Endothelial cell of umbilical vein (primary cell): ENCODE measurements at regions of chr3 and their contacts with region 1.

Region 1: GRCh38 chr3:148955544-148956346 is 35.6 kb upstream of the GYG1 start:
- DNase-seq: peak; percentile 87
- H3K4me3 ChIP-seq: no peak overlapping the region
- H3K27ac ChIP-seq: no peak overlapping the region
- H3K4me1 ChIP-seq: peaks cover 4% of the 10 kb centered on the region
- H3K27me3 ChIP-seq: no peaks in the 10 kb centered on the region
- CTCF ChIP-seq: peak; percentile 41 to 64
- POLR2A ChIP-seq: no peak

Region 2: GRCh38 chr3:148379763-148380382 is 575.9 kb before region 1 on chr3:
- CTCF ChIA-PET with region 1: no interaction called
- POLR2A ChIA-PET with region 1: no interaction called
- dilution Hi-C with region 1: no loop called
- intact Hi-C with region 1: no loop called
- DNase-seq: peak; percentile 58
- H3K4me3 ChIP-seq: no peak overlapping the region
- H3K27ac ChIP-seq: no peak overlapping the region
- H3K4me1 ChIP-seq: no peaks in the 10 kb centered on the region
- H3K27me3 ChIP-seq: no peaks in the 10 kb centered on the region
- CTCF ChIP-seq: peak; percentile 26 to 34
- POLR2A ChIP-seq: no peak

Region 3: GRCh38 chr3:148757238-148758215 is 198.2 kb before region 1 on chr3:
- CTCF ChIA-PET with region 1: no interaction called
- POLR2A ChIA-PET with region 1: no interaction called
- dilution Hi-C with region 1: no loop called
- intact Hi-C with region 1: no loop called
- DNase-seq: no peak
- H3K4me3 ChIP-seq: no peak overlapping the region
- H3K27ac ChIP-seq: no peak overlapping the region
- H3K4me1 ChIP-seq: no peaks in the 10 kb centered on the region
- H3K27me3 ChIP-seq: no peaks in the 10 kb centered on the region
- CTCF ChIP-seq: no peak
- POLR2A ChIP-seq: no peak

Region 4: DNA sequence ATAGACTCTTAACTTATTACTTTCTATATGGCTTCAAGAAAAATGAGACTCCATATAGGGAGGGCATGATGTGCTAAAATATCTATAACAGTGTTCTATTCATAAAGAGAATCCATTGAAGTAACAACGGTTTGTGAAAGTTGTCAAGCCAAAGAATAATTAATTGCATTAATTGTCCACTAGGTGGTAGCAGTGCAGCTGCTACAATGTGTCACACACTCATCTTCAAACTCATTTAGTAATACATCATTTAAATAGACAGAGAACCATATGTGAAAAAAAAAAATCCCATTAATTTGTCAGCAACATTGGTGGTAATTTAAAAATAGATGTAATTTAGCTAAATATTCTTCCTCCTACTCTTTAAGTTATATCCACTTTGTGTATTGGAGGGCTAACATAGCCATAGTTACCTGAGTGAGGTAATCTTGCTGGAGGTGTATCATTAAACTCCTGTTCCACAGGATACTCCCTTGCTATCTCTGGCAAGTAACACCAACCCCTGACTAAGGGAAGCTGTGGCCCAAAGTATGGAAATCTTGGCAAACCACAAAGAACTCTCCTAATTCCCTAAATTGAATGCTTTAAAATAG is 94.4 kb before region 1 on chr3:
- CTCF ChIA-PET with region 1: interaction called, 18 read pairs
- POLR2A ChIA-PET with region 1: no interaction called
- dilution Hi-C with region 1: no loop called
- intact Hi-C with region 1: no loop called
- DNase-seq: peak; percentile 60
- H3K4me3 ChIP-seq: no peak overlapping the region
- H3K27ac ChIP-seq: no peak overlapping the region
- H3K4me1 ChIP-seq: no peaks in the 10 kb centered on the region
- H3K27me3 ChIP-seq: peaks cover 18 to 28% of the 10 kb centered on the region in 2 experiments
- CTCF ChIP-seq: peak; percentile 30 to 46
- POLR2A ChIP-seq: no peak

Region 5: GRCh38 chr3:148991194-148992026 is 35.7 kb after region 1 on chr3 and contains the start of gene GYG1:
- CTCF ChIA-PET with region 1: interaction called, 11 read pairs
- POLR2A ChIA-PET with region 1: interaction called, 3 read pairs
- dilution Hi-C with region 1: no loop called
- intact Hi-C with region 1: no loop called
- DNase-seq: peak; percentile 85
- H3K4me3 ChIP-seq: peak within 1 kb of the TSS; percentile 61 to 88 (median 66)
- H3K27ac ChIP-seq: peak within 1 kb of the TSS; percentile 30
- H3K4me1 ChIP-seq: peaks cover 9% of the 10 kb centered on the region
- H3K27me3 ChIP-seq: no peaks in the 10 kb centered on the region
- CTCF ChIP-seq: peak; percentile 8 to 10
- POLR2A ChIP-seq: peak; percentile 95
- total RNA-seq, gene GYG1: 46.8 and 58.5 TPM in 2 replicates

Region 6: DNA sequence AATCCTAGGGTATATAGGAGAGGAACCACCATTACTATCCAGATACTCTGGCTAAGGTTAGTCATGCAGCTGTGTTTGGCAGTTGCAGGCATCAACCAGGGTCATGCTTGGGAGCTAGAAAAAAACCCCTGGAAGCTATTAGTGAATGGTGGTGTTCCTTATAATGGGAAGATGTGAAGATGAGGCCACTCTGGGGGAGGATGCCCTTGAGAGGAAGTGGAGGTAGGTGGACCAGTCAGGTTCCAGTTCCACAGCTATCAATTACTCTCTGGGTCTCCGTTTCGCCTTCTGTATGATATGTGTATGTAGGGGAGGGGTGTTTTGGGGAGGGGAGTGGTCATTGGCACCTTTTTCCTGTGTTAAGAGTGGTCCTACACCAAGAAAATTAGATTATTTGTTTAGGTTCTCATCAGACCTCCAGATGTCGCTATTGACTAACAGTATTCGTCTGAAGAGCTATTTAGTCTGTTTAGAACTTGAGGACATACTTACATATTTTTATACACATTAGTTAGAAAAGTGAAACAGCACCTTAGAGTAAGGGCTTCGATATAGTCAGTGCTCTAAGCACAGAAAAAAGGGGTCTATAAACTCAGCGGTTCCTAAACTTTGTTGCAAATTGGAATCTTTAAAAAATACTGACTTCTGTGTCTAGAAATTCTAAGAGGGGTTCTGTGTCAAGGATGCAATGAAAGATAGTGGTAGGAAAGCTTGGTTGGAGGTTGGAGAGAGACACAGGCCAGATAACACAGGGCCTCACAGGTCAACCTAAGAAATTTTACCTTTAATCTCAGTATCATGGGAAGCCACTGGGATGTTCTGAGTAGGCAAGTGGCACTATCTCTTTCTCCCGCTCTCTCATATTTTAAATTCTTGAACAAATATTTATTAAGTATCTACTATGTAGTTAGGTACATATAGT is 164.6 kb after region 1 on chr3:
- CTCF ChIA-PET with region 1: interaction called, 136 read pairs
- POLR2A ChIA-PET with region 1: no interaction called
- dilution Hi-C with region 1: no loop called
- intact Hi-C with region 1: loop called (anchors 1 kb)
- DNase-seq: peak; percentile 80
- H3K4me3 ChIP-seq: no peak overlapping the region
- H3K27ac ChIP-seq: no peak overlapping the region
- H3K4me1 ChIP-seq: no peaks in the 10 kb centered on the region
- H3K27me3 ChIP-seq: no peaks in the 10 kb centered on the region
- CTCF ChIP-seq: peak; percentile 21 to 39
- POLR2A ChIP-seq: no peak

Region 7: DNA sequence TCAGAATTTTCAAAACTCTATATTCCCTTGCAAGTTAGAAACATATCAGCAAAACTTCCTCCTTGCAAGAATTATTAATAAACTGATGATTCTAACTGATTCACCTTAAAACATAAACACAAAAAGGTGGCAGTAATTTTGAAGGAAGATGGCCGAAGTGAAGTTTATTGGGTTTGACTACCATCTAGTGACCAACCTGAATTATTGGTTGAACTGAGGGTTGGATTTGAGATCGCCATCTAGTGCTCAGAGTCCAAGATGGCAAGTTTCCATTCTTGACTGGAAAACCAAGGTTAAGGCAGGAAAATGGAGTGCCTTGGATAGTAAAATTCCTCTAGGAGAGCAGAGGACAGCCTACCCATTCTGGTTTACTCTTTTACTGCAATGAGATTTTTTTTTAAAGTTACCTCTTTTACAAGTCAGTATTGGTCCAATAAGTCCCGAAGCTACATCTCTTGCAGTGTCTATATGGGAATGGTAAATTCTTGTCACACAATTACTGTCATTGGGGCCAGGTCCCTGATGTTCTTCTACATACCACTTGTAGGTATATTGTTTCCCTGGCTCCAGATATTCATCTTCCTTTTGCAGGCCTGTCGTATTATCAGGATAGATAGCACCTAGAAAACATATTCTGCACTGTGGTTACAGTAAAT is 317.5 kb after region 1 on chr3:
- CTCF ChIA-PET with region 1: interaction called, 70 read pairs
- POLR2A ChIA-PET with region 1: no interaction called
- dilution Hi-C with region 1: no loop called
- intact Hi-C with region 1: loop called (anchors 1 kb)
- DNase-seq: peak; percentile 86
- H3K4me3 ChIP-seq: no peak overlapping the region
- H3K27ac ChIP-seq: no peak overlapping the region
- H3K4me1 ChIP-seq: peaks cover 3% of the 10 kb centered on the region
- H3K27me3 ChIP-seq: no peaks in the 10 kb centered on the region
- CTCF ChIP-seq: peak; percentile 78 to 91
- POLR2A ChIP-seq: no peak

Region 8: GRCh38 chr3:149366941-149367840 is 411.4 kb after region 1 on chr3:
- CTCF ChIA-PET with region 1: interaction called, 17 read pairs
- POLR2A ChIA-PET with region 1: interaction called, 5 read pairs
- dilution Hi-C with region 1: no loop called
- intact Hi-C with region 1: loop called (anchors 10 kb)
- DNase-seq: peak; percentile 90
- H3K4me3 ChIP-seq: no peak overlapping the region
- H3K27ac ChIP-seq: peak overlapping the region; percentile 39
- H3K4me1 ChIP-seq: peaks cover 52% of the 10 kb centered on the region
- H3K27me3 ChIP-seq: no peaks in the 10 kb centered on the region
- CTCF ChIP-seq: no peak
- POLR2A ChIP-seq: peak; percentile 61

Region 9: GRCh38 chr3:149487598-149488197 is 532.0 kb after region 1 on chr3:
- CTCF ChIA-PET with region 1: interaction called, 22 read pairs
- POLR2A ChIA-PET with region 1: no interaction called
- dilution Hi-C with region 1: no loop called
- intact Hi-C with region 1: loop called (anchors 1 kb)
- DNase-seq: no peak
- H3K4me3 ChIP-seq: no peak overlapping the region
- H3K27ac ChIP-seq: no peak overlapping the region
- H3K4me1 ChIP-seq: peaks cover 3% of the 10 kb centered on the region
- H3K27me3 ChIP-seq: no peaks in the 10 kb centered on the region
- CTCF ChIP-seq: peak; percentile 40 to 53
- POLR2A ChIP-seq: no peak